ENCODE measurements at regions of chr1 and their contacts with region 1.

Region 1: GRCh38 chr1:63691701-63692425 is 82.0 kb upstream of the ROR1 start:
- ATAC-seq: peak; percentile 88 to 97 (median 90)
- H3K4me3 ChIP-seq: no peak overlapping the region
- H3K27ac ChIP-seq: peak overlapping the region in 1 of 2 donors; percentile 38
- H3K4me1 ChIP-seq: peaks cover 0 to 12% of the 10 kb centered on the region in 2 donors

Region 2: GRCh38 chr1:63501256-63501655 is 190.6 kb before region 1 on chr1:
- in situ Hi-C with region 1: no loop called
- ATAC-seq: no peak
- H3K4me3 ChIP-seq: no peak overlapping the region
- H3K27ac ChIP-seq: no peak overlapping the region
- H3K4me1 ChIP-seq: no peaks in the 10 kb centered on the region

Region 3: GRCh38 chr1:63569640-63570316 is 122.1 kb before region 1 on chr1:
- in situ Hi-C with region 1: no loop called
- ATAC-seq: no peak
- H3K4me3 ChIP-seq: no peak overlapping the region
- H3K27ac ChIP-seq: no peak overlapping the region
- H3K4me1 ChIP-seq: no peaks in the 10 kb centered on the region

Region 4: DNA sequence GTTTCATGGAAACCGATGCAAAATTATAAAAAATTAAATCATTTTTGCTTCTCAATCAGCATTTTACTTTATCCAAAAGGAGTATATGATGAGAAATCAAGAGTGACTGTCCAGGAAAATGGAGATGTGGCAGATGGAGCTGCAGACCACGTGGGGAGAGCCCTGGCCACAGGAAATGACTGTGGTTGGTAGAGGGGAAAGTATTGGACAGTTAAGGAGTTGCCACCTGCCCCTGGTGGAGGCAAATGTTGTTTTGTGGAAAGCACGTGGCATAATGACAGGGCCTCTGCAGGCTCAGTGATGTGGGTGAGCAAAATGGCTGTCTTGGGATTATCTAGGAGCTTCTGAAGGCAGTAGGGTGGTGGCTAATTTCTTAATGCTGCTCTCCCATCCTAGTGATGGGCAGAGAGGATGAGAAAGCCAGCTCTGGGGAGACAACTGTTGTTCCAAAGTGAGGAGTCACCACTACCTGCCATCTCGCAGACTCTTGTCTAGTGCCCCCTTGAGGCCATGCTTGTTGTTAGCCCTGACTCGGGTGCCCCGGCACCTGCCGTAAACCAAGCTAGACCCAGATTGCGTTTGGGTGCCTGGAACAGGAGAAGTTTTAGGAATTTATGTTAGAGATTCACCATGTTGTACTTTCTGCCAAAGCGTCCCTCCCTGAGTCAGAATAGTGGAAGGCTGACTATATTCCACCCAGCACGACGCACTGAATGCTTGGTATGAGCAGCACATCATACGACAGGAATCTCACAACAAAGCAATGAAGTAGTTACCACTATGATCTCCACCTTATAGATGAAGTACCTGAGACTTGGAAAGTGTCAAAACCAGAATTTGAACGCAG is 225.9 kb after region 1 on chr1:
- in situ Hi-C with region 1: loop called in 1 of 9 experiments (anchors 25 kb)
- ATAC-seq: peak in 1 of 8 experiments; percentile 30
- H3K4me3 ChIP-seq: no peak overlapping the region
- H3K27ac ChIP-seq: no peak overlapping the region
- H3K4me1 ChIP-seq: peaks cover 8 to 16% of the 10 kb centered on the region in 2 donors

Region 5: DNA sequence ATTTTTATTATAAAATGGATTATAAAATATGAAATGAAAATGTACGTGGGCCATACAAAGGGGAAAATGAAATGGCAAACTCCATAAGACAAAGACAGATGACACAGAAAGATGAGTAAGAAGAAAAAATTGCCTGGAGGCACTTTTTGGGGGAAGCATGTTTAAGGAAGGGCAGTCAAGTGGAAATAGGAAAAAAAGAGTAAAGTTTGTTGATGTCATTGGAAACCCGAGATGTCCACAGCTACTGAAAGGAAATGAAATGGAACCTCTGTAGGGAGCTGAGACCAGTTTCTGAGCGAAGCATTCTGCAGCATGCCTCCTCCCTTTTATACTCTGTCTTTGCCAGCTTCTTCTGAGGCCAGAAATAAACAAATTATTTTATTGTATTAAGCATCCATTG is 308.2 kb after region 1 on chr1:
- in situ Hi-C with region 1: no loop called
- ATAC-seq: peak in 2 of 8 experiments; percentile 55 to 89
- H3K4me3 ChIP-seq: no peak overlapping the region
- H3K27ac ChIP-seq: no peak overlapping the region
- H3K4me1 ChIP-seq: no peaks in the 10 kb centered on the region